ENCODE measurements at regions of chr12 and their contacts with region 1.

Region 1: GRCh38 chr12:53287741-53288216 is 7.6 kb upstream of the PFDN5 start:
- DNase-seq: peak in 1 of 2 donors; percentile 77
- H3K4me3 ChIP-seq: no peak overlapping the region
- H3K27ac ChIP-seq: no peak overlapping the region
- H3K4me1 ChIP-seq: no peaks in the 10 kb centered on the region
- H3K27me3 ChIP-seq: no peaks in the 10 kb centered on the region
- CTCF ChIP-seq: peak; percentile 51 to 60 (median 60)

Region 2: GRCh38 chr12:52650520-52651081 is 637.2 kb before region 1 on chr12:
- intact Hi-C with region 1: no loop called
- DNase-seq: peak in 1 of 2 donors; percentile 19
- H3K4me3 ChIP-seq: no peak overlapping the region
- H3K27ac ChIP-seq: no peak overlapping the region
- H3K4me1 ChIP-seq: no peaks in the 10 kb centered on the region
- H3K27me3 ChIP-seq: no peaks in the 10 kb centered on the region
- CTCF ChIP-seq: no peak

Region 3: GRCh38 chr12:53213348-53213747 is 74.4 kb before region 1 on chr12:
- intact Hi-C with region 1: loop called (anchors 1 kb)
- DNase-seq: peak in 1 of 2 donors; percentile 88
- H3K4me3 ChIP-seq: no peak overlapping the region
- H3K27ac ChIP-seq: no peak overlapping the region
- H3K4me1 ChIP-seq: peaks cover 11 to 27% of the 10 kb centered on the region in 2 donors
- H3K27me3 ChIP-seq: no peaks in the 10 kb centered on the region
- CTCF ChIP-seq: peak; percentile 88 to 99 (median 94)

Region 4: GRCh38 chr12:53465679-53466078 is 177.9 kb after region 1 on chr12:
- intact Hi-C with region 1: no loop called
- DNase-seq: no peak
- H3K4me3 ChIP-seq: no peak overlapping the region
- H3K27ac ChIP-seq: no peak overlapping the region
- H3K4me1 ChIP-seq: no peaks in the 10 kb centered on the region
- H3K27me3 ChIP-seq: no peaks in the 10 kb centered on the region
- CTCF ChIP-seq: no peak

Measured in ascending aorta (tissue), 2 donors.